A549 (cell line): ENCODE measurements at regions of chr2 and their contacts with region 1.

Region 1: GRCh38 chr2:208373460-208374089 is 33.0 kb upstream of the PTH2R start:
- DNase-seq: peak; percentile 44 to 67
- ATAC-seq: peak; percentile 67 to 76
- H3K4me3 ChIP-seq: no peak overlapping the region
- H3K27ac ChIP-seq: no peak overlapping the region
- H3K4me1 ChIP-seq: 0 out of 3 replicates have a peak, but pooled peaks cover 3% of the 10 kb centered on the region
- CTCF ChIP-seq: peak; percentile 78
- EP300 ChIP-seq: no peak
- POLR2A ChIP-seq: no peak
- RAD21 ChIP-seq: peak; percentile 58 to 59

Region 2: GRCh38 chr2:208350610-208351009 is 23.0 kb before region 1 on chr2:
- CTCF ChIA-PET with region 1: no interaction called
- POLR2A ChIA-PET with region 1: no interaction called
- DNase-seq: no peak
- ATAC-seq: no peak
- H3K4me3 ChIP-seq: no peak overlapping the region
- H3K27ac ChIP-seq: no peak overlapping the region
- H3K4me1 ChIP-seq: no peaks in the 10 kb centered on the region
- CTCF ChIP-seq: no peak
- EP300 ChIP-seq: no peak
- POLR2A ChIP-seq: no peak
- RAD21 ChIP-seq: no peak

Region 3: GRCh38 chr2:208386541-208386940 is 13.0 kb after region 1 on chr2:
- CTCF ChIA-PET with region 1: interaction called, 17 read pairs
- POLR2A ChIA-PET with region 1: no interaction called
- DNase-seq: no peak
- ATAC-seq: no peak
- H3K4me3 ChIP-seq: no peak overlapping the region
- H3K27ac ChIP-seq: no peak overlapping the region
- H3K4me1 ChIP-seq: no peaks in the 10 kb centered on the region
- CTCF ChIP-seq: no peak
- EP300 ChIP-seq: no peak
- POLR2A ChIP-seq: no peak
- RAD21 ChIP-seq: no peak

Region 4: DNA sequence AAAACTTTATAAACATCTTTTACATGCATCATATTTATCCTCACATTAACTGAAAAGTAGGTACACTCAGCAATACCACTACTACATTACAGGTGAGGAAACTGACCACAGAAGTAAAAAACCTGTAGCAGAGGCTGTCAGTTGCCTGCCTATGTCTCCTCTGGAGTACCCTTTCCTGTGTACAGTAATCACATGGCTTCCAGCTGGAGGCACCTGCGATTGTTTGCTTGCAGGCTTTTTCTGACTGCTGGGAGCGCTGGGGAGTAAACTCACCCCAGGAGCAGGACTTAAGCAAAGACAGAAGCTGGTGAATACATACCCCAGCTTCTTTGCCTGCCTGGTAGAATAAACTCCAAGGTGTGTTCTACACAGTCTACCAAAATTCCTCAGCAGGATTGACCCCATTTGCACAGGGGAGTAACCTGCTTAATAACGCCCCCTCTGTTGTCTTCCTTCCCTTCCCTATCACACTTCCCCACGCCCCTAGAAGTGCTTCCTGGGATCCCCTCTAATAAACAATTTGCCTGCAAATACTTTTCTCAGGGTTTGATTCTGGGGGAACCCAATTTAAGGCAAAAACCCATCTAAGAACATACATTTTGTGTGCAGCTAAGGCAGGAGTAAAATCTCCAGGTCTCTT is 171.9 kb after region 1 on chr2:
- CTCF ChIA-PET with region 1: no interaction called
- POLR2A ChIA-PET with region 1: no interaction called
- DNase-seq: no peak
- ATAC-seq: no peak
- H3K4me3 ChIP-seq: no peak overlapping the region
- H3K27ac ChIP-seq: no peak overlapping the region
- H3K4me1 ChIP-seq: no peaks in the 10 kb centered on the region
- CTCF ChIP-seq: no peak
- EP300 ChIP-seq: no peak
- POLR2A ChIP-seq: no peak
- RAD21 ChIP-seq: no peak